ENCODE measurements at regions of chr11 and their contacts with region 1.

Region 1: GRCh38 chr11:117946842-117947526 is 17.8 kb upstream of the TMPRSS13 start:
- DNase-seq: peak; percentile 60 to 93 (median 83)
- ATAC-seq: peak; percentile 13
- H3K4me3 ChIP-seq: no peak overlapping the region
- H3K4me3 Mint-ChIP-seq: peak overlapping the region; percentile 37
- H3K27ac ChIP-seq: no peak overlapping the region
- H3K27ac Mint-ChIP-seq: peak overlapping the region; percentile 66
- H3K4me1 ChIP-seq: peaks cover 51% of the 10 kb centered on the region
- H3K4me1 Mint-ChIP-seq: peaks cover 69% of the 10 kb centered on the region
- H3K27me3 ChIP-seq: no peaks in the 10 kb centered on the region
- H3K27me3 Mint-ChIP-seq: no peaks in the 10 kb centered on the region
- CTCF ChIP-seq: peak; percentile 89

Region 2: DNA sequence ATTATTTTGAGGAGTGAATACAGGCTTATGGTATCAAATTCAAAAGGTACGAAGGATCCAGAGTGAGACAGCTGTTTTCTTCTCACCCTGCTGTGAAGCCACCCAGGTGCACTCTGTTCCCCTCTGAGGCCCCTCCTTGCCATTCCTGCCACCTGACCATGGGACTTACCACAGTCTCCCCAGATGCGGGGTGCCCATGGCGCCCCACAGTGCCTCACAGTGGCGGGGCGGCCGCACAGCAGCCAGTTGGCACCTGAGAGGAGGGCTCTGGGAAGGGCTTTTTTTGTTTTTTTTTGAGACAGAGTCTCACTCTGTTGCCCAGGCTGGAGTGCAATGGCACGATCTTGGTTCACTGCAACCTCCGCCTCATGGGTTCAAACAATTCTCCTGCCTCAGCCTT is 467.6 kb before region 1 on chr11:
- CTCF ChIA-PET with region 1: no interaction called
- POLR2A ChIA-PET with region 1: no interaction called
- intact Hi-C with region 1: no loop called
- DNase-seq: no peak
- ATAC-seq: no peak
- H3K4me3 ChIP-seq: no peak overlapping the region
- H3K4me3 Mint-ChIP-seq: no peak overlapping the region
- H3K27ac ChIP-seq: no peak overlapping the region
- H3K27ac Mint-ChIP-seq: no peak overlapping the region
- H3K4me1 ChIP-seq: no peaks in the 10 kb centered on the region
- H3K4me1 Mint-ChIP-seq: no peaks in the 10 kb centered on the region
- H3K27me3 ChIP-seq: no peaks in the 10 kb centered on the region
- H3K27me3 Mint-ChIP-seq: no peaks in the 10 kb centered on the region
- CTCF ChIP-seq: no peak

Region 3: DNA sequence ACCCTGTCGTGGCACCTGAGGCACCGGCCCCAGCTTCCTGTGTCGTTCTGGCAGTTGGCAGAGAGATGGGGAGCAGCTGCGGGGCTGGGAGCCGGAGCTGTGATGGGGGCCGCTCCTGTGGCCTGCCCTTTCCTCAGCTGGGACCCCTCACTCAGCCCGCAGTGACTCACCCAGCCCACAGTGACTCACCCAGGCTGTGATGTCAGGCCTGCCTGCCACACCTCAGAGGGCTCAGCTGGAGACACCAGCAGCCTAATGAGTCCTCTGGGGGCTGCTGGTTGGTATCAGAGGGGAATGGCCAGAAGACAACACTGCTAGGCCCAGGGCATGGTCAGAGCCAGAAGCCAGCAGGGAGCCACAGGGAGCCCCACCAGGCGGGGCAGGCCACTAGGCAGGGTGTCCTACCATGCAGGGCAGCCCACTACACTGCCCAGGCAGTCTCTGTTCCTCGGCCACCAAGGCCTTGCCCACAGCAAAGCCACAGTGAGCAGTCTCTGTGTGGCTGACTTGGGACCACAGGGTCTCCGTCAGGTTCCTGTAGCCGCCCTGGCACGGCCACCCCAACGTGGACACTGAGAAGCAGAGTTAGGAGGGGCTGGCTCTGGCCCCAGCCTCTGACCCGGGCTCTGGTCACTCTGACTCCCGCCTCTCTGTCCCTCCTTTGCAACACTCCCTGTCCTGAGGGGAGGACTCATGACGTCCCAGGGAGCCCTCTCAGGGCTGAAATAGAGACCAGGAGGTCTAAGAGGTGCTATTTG is 118.2 kb before region 1 on chr11:
- CTCF ChIA-PET with region 1: interaction called, 258 read pairs
- POLR2A ChIA-PET with region 1: interaction called, 13 read pairs
- intact Hi-C with region 1: loop called in 1 of 2 experiments (anchors 1 kb)
- DNase-seq: peak; percentile 58 to 94 (median 89)
- ATAC-seq: peak; percentile 87
- H3K4me3 ChIP-seq: no peak overlapping the region
- H3K4me3 Mint-ChIP-seq: peak overlapping the region; percentile 53
- H3K27ac ChIP-seq: peak overlapping the region in 1 of 2 experiments; percentile 69
- H3K27ac Mint-ChIP-seq: peak overlapping the region; percentile 91
- H3K4me1 ChIP-seq: peaks cover 52% of the 10 kb centered on the region
- H3K4me1 Mint-ChIP-seq: peaks cover 69% of the 10 kb centered on the region
- H3K27me3 ChIP-seq: no peaks in the 10 kb centered on the region
- H3K27me3 Mint-ChIP-seq: no peaks in the 10 kb centered on the region
- CTCF ChIP-seq: no peak

Region 4: GRCh38 chr11:117932067-117932370 is 15.0 kb before region 1 on chr11:
- CTCF ChIA-PET with region 1: interaction called, 82 read pairs
- POLR2A ChIA-PET with region 1: interaction called, 4 read pairs
- intact Hi-C with region 1: loop called in 1 of 2 experiments (anchors 2 kb)
- DNase-seq: peak in 6 of 9 experiments; percentile 32 to 73 (median 56)
- ATAC-seq: no peak
- H3K4me3 ChIP-seq: no peak overlapping the region
- H3K4me3 Mint-ChIP-seq: no peak overlapping the region
- H3K27ac ChIP-seq: peak overlapping the region in 1 of 2 experiments; percentile 65
- H3K27ac Mint-ChIP-seq: peak overlapping the region; percentile 91
- H3K4me1 ChIP-seq: peaks cover 52% of the 10 kb centered on the region
- H3K4me1 Mint-ChIP-seq: peaks cover 56% of the 10 kb centered on the region
- H3K27me3 ChIP-seq: no peaks in the 10 kb centered on the region
- H3K27me3 Mint-ChIP-seq: no peaks in the 10 kb centered on the region
- CTCF ChIP-seq: no peak

Region 5: GRCh38 chr11:117985953-117986887 is 39.2 kb after region 1 on chr11 and contains the start of gene IL10RA:
- CTCF ChIA-PET with region 1: interaction called, 403 read pairs
- POLR2A ChIA-PET with region 1: interaction called, 438 read pairs
- intact Hi-C with region 1: loop called (anchors 1 kb)
- DNase-seq: peak; percentile 66 to 92 (median 80)
- ATAC-seq: peak; percentile 75
- H3K4me3 ChIP-seq: peak within 1 kb of the TSS; percentile 81 to 100
- H3K4me3 Mint-ChIP-seq: peak within 1 kb of the TSS; percentile 89
- H3K27ac ChIP-seq: peak within 1 kb of the TSS; percentile 88
- H3K27ac Mint-ChIP-seq: peak within 1 kb of the TSS; percentile 92
- H3K4me1 ChIP-seq: peaks cover 57% of the 10 kb centered on the region
- H3K4me1 Mint-ChIP-seq: peaks cover 72% of the 10 kb centered on the region
- H3K27me3 ChIP-seq: no peaks in the 10 kb centered on the region
- H3K27me3 Mint-ChIP-seq: no peaks in the 10 kb centered on the region
- CTCF ChIP-seq: no peak
- total RNA-seq, gene IL10RA: 295 to 299 TPM

Region 6: GRCh38 chr11:118033443-118033842 is 86.5 kb after region 1 on chr11:
- CTCF ChIA-PET with region 1: interaction called, 14 read pairs
- POLR2A ChIA-PET with region 1: no interaction called
- intact Hi-C with region 1: no loop called
- DNase-seq: no peak
- ATAC-seq: no peak
- H3K4me3 ChIP-seq: no peak overlapping the region
- H3K4me3 Mint-ChIP-seq: no peak overlapping the region
- H3K27ac ChIP-seq: no peak overlapping the region
- H3K27ac Mint-ChIP-seq: no peak overlapping the region
- H3K4me1 ChIP-seq: peaks cover 4% of the 10 kb centered on the region
- H3K4me1 Mint-ChIP-seq: peaks cover 34% of the 10 kb centered on the region
- H3K27me3 ChIP-seq: no peaks in the 10 kb centered on the region
- H3K27me3 Mint-ChIP-seq: no peaks in the 10 kb centered on the region
- CTCF ChIP-seq: no peak

Region 7: GRCh38 chr11:118198370-118198769 is 251.4 kb after region 1 on chr11:
- CTCF ChIA-PET with region 1: no interaction called
- POLR2A ChIA-PET with region 1: no interaction called
- intact Hi-C with region 1: no loop called
- DNase-seq: peak; percentile 68 to 89 (median 88)
- ATAC-seq: peak; percentile 18
- H3K4me3 ChIP-seq: no peak overlapping the region
- H3K4me3 Mint-ChIP-seq: peak overlapping the region; percentile 27
- H3K27ac ChIP-seq: no peak overlapping the region
- H3K27ac Mint-ChIP-seq: peak overlapping the region; percentile 81
- H3K4me1 ChIP-seq: peaks cover 46% of the 10 kb centered on the region
- H3K4me1 Mint-ChIP-seq: peaks cover 11% of the 10 kb centered on the region
- H3K27me3 ChIP-seq: no peaks in the 10 kb centered on the region
- H3K27me3 Mint-ChIP-seq: no peaks in the 10 kb centered on the region
- CTCF ChIP-seq: peak; percentile 95